Activated naive CD4-positive, alpha-beta T cell treated with anti-CD3 and anti-CD28 coated beads for 36 hours (primary cell): ENCODE measurements at regions of chr4 and their contacts with region 1.

Region 1: GRCh38 chr4:108483079-108483478 is 137.3 kb upstream of the RPL34 start:
- DNase-seq: peak; percentile 60
- H3K4me3 Mint-ChIP-seq: peak overlapping the region; percentile 33
- H3K27ac Mint-ChIP-seq: peak overlapping the region; percentile 16
- H3K4me1 Mint-ChIP-seq: peaks cover 33% of the 10 kb centered on the region
- H3K27me3 Mint-ChIP-seq: no peaks in the 10 kb centered on the region

Region 2: GRCh38 chr4:108425988-108426387 is 57.1 kb before region 1 on chr4:
- CTCF ChIA-PET with region 1: interaction called, 4 read pairs
- intact Hi-C with region 1: loop called (anchors 1 kb)
- DNase-seq: no peak
- H3K4me3 Mint-ChIP-seq: no peak overlapping the region
- H3K27ac Mint-ChIP-seq: peak overlapping the region; percentile 48
- H3K4me1 Mint-ChIP-seq: peaks cover 21% of the 10 kb centered on the region
- H3K27me3 Mint-ChIP-seq: no peaks in the 10 kb centered on the region

Region 3: GRCh38 chr4:108527723-108528122 is 44.6 kb after region 1 on chr4:
- CTCF ChIA-PET with region 1: no interaction called
- intact Hi-C with region 1: no loop called
- DNase-seq: peak; percentile 45
- H3K4me3 Mint-ChIP-seq: peak overlapping the region; percentile 34
- H3K27ac Mint-ChIP-seq: peak overlapping the region; percentile 70
- H3K4me1 Mint-ChIP-seq: peaks cover 58% of the 10 kb centered on the region
- H3K27me3 Mint-ChIP-seq: no peaks in the 10 kb centered on the region